ENCODE measurements at regions of chr3 and their contacts with region 1.

Region 1: GRCh38 chr3:27484015-27484844 is at the start of gene SLC4A7:
- DNase-seq: peak; percentile 98
- ATAC-seq: peak; percentile 94
- H3K4me3 Mint-ChIP-seq: peak within 1 kb of the TSS; percentile 95
- H3K27ac Mint-ChIP-seq: peak within 1 kb of the TSS; percentile 95
- H3K4me1 Mint-ChIP-seq: peaks cover 31% of the 10 kb centered on the region
- H3K27me3 Mint-ChIP-seq: no peaks in the 10 kb centered on the region
- CTCF ChIP-seq: no peak
- total RNA-seq, gene SLC4A7: 48.0 to 48.8 TPM

Region 2: GRCh38 chr3:27423463-27423862 is 60.8 kb before region 1 on chr3:
- CTCF ChIA-PET with region 1: no interaction called
- POLR2A ChIA-PET with region 1: no interaction called
- intact Hi-C with region 1: no loop called
- DNase-seq: no peak
- ATAC-seq: no peak
- H3K4me3 Mint-ChIP-seq: no peak overlapping the region
- H3K27ac Mint-ChIP-seq: no peak overlapping the region
- H3K4me1 Mint-ChIP-seq: no peaks in the 10 kb centered on the region
- H3K27me3 Mint-ChIP-seq: no peaks in the 10 kb centered on the region
- CTCF ChIP-seq: no peak

Region 3: GRCh38 chr3:27632431-27633223 is 148.4 kb after region 1 on chr3:
- CTCF ChIA-PET with region 1: no interaction called
- POLR2A ChIA-PET with region 1: no interaction called
- intact Hi-C with region 1: loop called (anchors 10 kb)
- DNase-seq: peak; percentile 52
- ATAC-seq: peak; percentile 85
- H3K4me3 Mint-ChIP-seq: peak overlapping the region; percentile 79
- H3K27ac Mint-ChIP-seq: peak overlapping the region; percentile 83
- H3K4me1 Mint-ChIP-seq: peaks cover 34% of the 10 kb centered on the region
- H3K27me3 Mint-ChIP-seq: no peaks in the 10 kb centered on the region
- CTCF ChIP-seq: no peak

Region 4: DNA sequence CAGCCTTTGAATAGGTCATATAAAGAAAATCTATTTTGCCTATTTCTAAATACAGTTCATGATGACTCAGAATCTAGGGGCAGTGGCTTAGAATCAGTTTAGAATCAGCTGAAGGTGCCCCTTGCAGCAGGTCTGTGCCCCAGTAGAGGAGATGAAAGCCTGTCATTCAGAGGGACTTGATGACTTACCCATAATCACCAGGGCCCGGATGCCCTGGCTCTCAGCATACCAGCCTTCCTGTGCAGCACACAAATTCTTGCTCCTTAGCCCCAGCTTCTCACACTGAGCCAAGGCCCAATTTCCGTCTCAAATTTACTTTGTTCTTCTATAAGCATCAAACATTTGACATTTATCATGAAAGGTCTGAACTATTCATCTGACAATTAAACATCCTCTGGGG is 321.1 kb after region 1 on chr3:
- CTCF ChIA-PET with region 1: no interaction called
- POLR2A ChIA-PET with region 1: no interaction called
- intact Hi-C with region 1: no loop called
- DNase-seq: peak; percentile 19
- ATAC-seq: peak; percentile 70
- H3K4me3 Mint-ChIP-seq: no peak overlapping the region
- H3K27ac Mint-ChIP-seq: peak overlapping the region; percentile 47
- H3K4me1 Mint-ChIP-seq: peaks cover 18% of the 10 kb centered on the region
- H3K27me3 Mint-ChIP-seq: no peaks in the 10 kb centered on the region
- CTCF ChIP-seq: no peak